Dorsolateral prefrontal cortex (tissue), 120 donors: ENCODE measurements at regions of chr5 and their contacts with region 1.

Region 1: GRCh38 chr5:147055850-147056566 is 177.5 kb upstream of the PPP2R2B start:
- DNase-seq: peak in 7 of 10 donors; percentile 38 to 63 (median 46)
- H3K4me3 ChIP-seq: peak overlapping the region; percentile 7 to 64 (median 48)
- H3K27ac ChIP-seq: peak overlapping the region; percentile 2 to 91 (median 80)
- H3K27me3 ChIP-seq: no peaks in the 10 kb centered on the region
- CTCF ChIP-seq: peak in 1 of 56 donors; percentile 10

Region 2: GRCh38 chr5:147017191-147017590 is 38.8 kb before region 1 on chr5:
- intact Hi-C with region 1: loop called in 1 of 2 experiments (anchors 5 kb)
- DNase-seq: peak in 1 of 10 donors; percentile 18
- H3K4me3 ChIP-seq: peak overlapping the region in 27 of 59 donors; percentile 0 to 44 (median 14)
- H3K27ac ChIP-seq: peak overlapping the region in 55 of 59 donors; percentile 3 to 86 (median 58)
- H3K27me3 ChIP-seq: no peaks in the 10 kb centered on the region
- CTCF ChIP-seq: peak in 1 of 56 donors; percentile 5